ENCODE measurements at regions of chr17 and their contacts with region 1.

Region 1: GRCh38 chr17:73231841-73232586 is 29.7 kb downstream of the CPSF4L start:
- DNase-seq: peak; percentile 95 to 98 (median 97)
- H3K4me3 ChIP-seq: peak overlapping the region; percentile 78
- H3K27ac ChIP-seq: peak overlapping the region; percentile 23 to 71
- H3K4me1 ChIP-seq: peaks cover 7% of the 10 kb centered on the region
- H3K27me3 ChIP-seq: no peaks in the 10 kb centered on the region
- CTCF ChIP-seq: peak in 2 of 3 donors; percentile 41 to 70
- EP300 ChIP-seq: no peak
- POLR2A ChIP-seq: peak; percentile 55

Region 2: DNA sequence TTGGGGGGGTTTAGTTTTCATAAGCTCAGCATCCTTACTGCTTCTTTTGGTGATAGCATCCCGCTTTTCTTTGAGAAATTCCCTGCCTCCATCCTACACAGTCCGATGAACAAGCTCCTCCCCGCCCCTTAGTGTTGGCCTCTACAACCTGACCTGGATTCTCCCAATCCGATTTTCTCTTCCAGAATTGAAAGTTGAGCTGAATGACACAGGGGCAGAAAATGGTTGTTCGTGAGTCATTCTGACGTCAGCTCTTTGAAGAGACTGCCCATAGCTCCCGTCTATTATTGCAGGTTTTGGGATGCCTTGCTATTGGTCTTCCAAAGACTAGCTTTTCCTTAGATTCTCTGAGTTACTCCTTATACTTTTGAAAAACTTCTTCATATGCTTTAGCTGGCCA is 419.2 kb before region 1 on chr17:
- intact Hi-C with region 1: no loop called
- DNase-seq: no peak
- H3K4me3 ChIP-seq: no peak overlapping the region
- H3K27ac ChIP-seq: no peak overlapping the region
- H3K4me1 ChIP-seq: no peaks in the 10 kb centered on the region
- H3K27me3 ChIP-seq: no peaks in the 10 kb centered on the region
- CTCF ChIP-seq: no peak
- EP300 ChIP-seq: no peak
- POLR2A ChIP-seq: no peak

Region 3: GRCh38 chr17:73192894-73193701 is 38.9 kb before region 1 on chr17 and contains the start of gene COG1:
- intact Hi-C with region 1: loop called in 2 of 4 experiments (anchors 5 kb)
- DNase-seq: peak; percentile 79 to 94 (median 87)
- H3K4me3 ChIP-seq: peak within 1 kb of the TSS; percentile 97
- H3K27ac ChIP-seq: peak within 1 kb of the TSS; percentile 62 to 86
- H3K4me1 ChIP-seq: peaks cover 1% of the 10 kb centered on the region
- H3K27me3 ChIP-seq: no peaks in the 10 kb centered on the region
- CTCF ChIP-seq: no peak
- EP300 ChIP-seq: no peak
- POLR2A ChIP-seq: peak; percentile 47
- total RNA-seq, gene COG1: 25.0 to 59.1 (median 48.4) TPM